OCI-LY7 (cell line): ENCODE measurements at regions of chr14 and their contacts with region 1.

Region 1: GRCh38 chr14:69153131-69153872 is 383 bp upstream of the DCAF5 start:
- DNase-seq: peak; percentile 95
- H3K4me3 ChIP-seq: peak overlapping the region; percentile 84
- H3K27ac ChIP-seq: peak overlapping the region; percentile 80
- H3K4me1 ChIP-seq: peaks cover 25% of the 10 kb centered on the region
- CTCF ChIP-seq: no peak

Region 2: GRCh38 chr14:69129264-69129880 is 23.9 kb before region 1 on chr14:
- CTCF ChIA-PET with region 1: no interaction called
- POLR2A ChIA-PET with region 1: interaction called, 3 read pairs
- intact Hi-C with region 1: loop called (anchors 1 kb)
- DNase-seq: peak; percentile 79
- H3K4me3 ChIP-seq: no peak overlapping the region
- H3K27ac ChIP-seq: no peak overlapping the region
- H3K4me1 ChIP-seq: no peaks in the 10 kb centered on the region
- CTCF ChIP-seq: peak; percentile 97

Region 3: GRCh38 chr14:69191340-69192111 is 38.2 kb after region 1 on chr14 and contains the start of gene EXD2:
- CTCF ChIA-PET with region 1: no interaction called
- POLR2A ChIA-PET with region 1: no interaction called
- intact Hi-C with region 1: loop called (anchors 1 kb)
- DNase-seq: peak; percentile 87
- H3K4me3 ChIP-seq: peak within 1 kb of the TSS; percentile 70
- H3K27ac ChIP-seq: no peak within 1 kb of the TSS
- H3K4me1 ChIP-seq: peaks cover 11% of the 10 kb centered on the region
- CTCF ChIP-seq: no peak
- total RNA-seq, gene EXD2: 2.7 and 3.1 TPM in 2 replicates

Region 4: GRCh38 chr14:69553221-69553620 is 399.9 kb after region 1 on chr14:
- CTCF ChIA-PET with region 1: interaction called, 14 read pairs
- POLR2A ChIA-PET with region 1: no interaction called
- intact Hi-C with region 1: no loop called
- DNase-seq: no peak
- H3K4me3 ChIP-seq: no peak overlapping the region
- H3K27ac ChIP-seq: no peak overlapping the region
- H3K4me1 ChIP-seq: no peaks in the 10 kb centered on the region
- CTCF ChIP-seq: no peak

Region 5: DNA sequence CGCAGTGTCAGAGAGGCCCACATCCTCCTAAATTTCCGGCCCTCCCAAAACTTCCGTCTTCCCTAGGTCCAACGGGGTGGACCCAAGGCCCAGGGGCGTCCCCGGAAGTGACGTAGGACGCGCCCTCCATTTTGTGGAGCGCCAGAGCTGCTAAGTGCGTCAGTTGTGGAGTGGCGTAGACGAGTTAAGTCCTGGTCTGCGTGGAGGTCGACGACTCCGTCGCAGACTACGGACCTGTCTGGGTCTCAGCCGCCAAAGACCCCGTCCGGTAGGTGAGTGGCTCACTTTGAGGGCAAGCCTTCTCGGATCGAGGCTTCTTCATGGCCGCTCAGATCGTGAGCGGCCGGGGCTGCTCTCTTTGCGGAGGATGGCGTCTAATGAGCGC is 613.7 kb after region 1 on chr14 and contains the start of gene SRSF5:
- CTCF ChIA-PET with region 1: no interaction called
- POLR2A ChIA-PET with region 1: no interaction called
- intact Hi-C with region 1: loop called (anchors 10 kb)
- DNase-seq: peak; percentile 97
- H3K4me3 ChIP-seq: peak within 1 kb of the TSS; percentile 93
- H3K27ac ChIP-seq: peak within 1 kb of the TSS; percentile 87
- H3K4me1 ChIP-seq: peaks cover 14% of the 10 kb centered on the region
- CTCF ChIP-seq: no peak
- total RNA-seq, gene SRSF5: 341 and 456 TPM in 2 replicates